ENCODE measurements at regions of chr6 and their contacts with region 1.

Region 1: GRCh38 chr6:153301602-153302001 is 170.5 kb upstream of the RGS17 start:
- DNase-seq: peak in 1 of 2 experiments; percentile 50
- H3K4me3 ChIP-seq: no peak overlapping the region
- H3K27ac ChIP-seq: no peak overlapping the region
- H3K4me1 ChIP-seq: peaks cover 0 to 2% (median 0%) of the 10 kb centered on the region in 4 experiments; a peak in 1 of 7 replicates
- H3K27me3 ChIP-seq: no peaks in the 10 kb centered on the region
- CTCF ChIP-seq: peak; percentile 32 to 36 (median 32)
- EP300 ChIP-seq: no peak
- POLR2A ChIP-seq: no peak
- RAD21 ChIP-seq: no peak; a peak in 1 of 4 replicates

Region 2: DNA sequence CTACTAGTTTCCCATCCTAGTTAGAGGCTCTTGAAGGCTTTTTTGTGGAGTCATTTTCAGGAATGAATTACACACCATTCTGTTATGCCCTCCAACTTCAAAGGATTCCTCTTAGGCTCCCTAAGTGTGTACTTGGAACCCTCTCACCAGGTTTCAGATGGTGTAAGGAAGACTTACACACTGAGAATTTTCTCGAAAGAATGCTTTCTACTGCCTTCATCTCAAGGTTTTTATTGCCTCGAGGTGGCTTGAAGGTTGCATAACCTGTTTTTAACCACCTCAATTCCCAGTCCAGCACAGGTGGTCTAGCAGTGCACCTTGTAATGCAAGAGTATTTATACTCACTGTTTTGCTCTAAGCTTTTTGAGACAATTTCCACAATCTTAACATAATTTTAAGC is 58.8 kb before region 1 on chr6:
- CTCF ChIA-PET with region 1: no interaction called
- POLR2A ChIA-PET with region 1: no interaction called
- DNase-seq: no peak
- H3K4me3 ChIP-seq: no peak overlapping the region
- H3K27ac ChIP-seq: no peak overlapping the region
- H3K4me1 ChIP-seq: no peaks in the 10 kb centered on the region
- H3K27me3 ChIP-seq: no peaks in the 10 kb centered on the region
- CTCF ChIP-seq: no peak
- EP300 ChIP-seq: no peak
- POLR2A ChIP-seq: no peak
- RAD21 ChIP-seq: no peak

Region 3: DNA sequence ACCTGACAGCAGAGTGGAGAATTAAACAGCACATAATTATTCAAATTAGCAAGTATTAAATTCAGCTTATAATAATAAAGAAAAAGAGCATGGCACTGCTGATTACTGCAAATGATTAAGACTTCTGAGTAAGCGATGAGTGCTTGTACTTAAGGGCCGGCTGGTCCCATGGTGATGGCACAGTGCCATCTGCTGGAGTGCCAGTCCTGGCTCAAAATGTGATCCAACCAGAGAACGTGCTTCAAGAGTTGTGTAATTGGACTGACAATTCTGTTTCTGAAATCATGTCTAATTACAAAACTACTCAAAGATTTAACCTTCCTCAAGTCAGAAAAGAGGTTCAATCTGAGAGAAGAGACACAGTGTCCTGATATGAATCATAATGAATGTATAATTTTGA is 11.0 kb after region 1 on chr6:
- CTCF ChIA-PET with region 1: interaction called, 16 read pairs
- POLR2A ChIA-PET with region 1: no interaction called
- DNase-seq: peak in 1 of 2 experiments; percentile 48
- H3K4me3 ChIP-seq: no peak overlapping the region
- H3K27ac ChIP-seq: no peak overlapping the region
- H3K4me1 ChIP-seq: no peaks in the 10 kb centered on the region
- H3K27me3 ChIP-seq: no peaks in the 10 kb centered on the region
- CTCF ChIP-seq: peak; percentile 65 to 72 (median 70)
- EP300 ChIP-seq: no peak
- POLR2A ChIP-seq: no peak
- RAD21 ChIP-seq: peak; percentile 79 to 85

Measured in H1 (cell line).